CD4-positive, alpha-beta T cell (primary cell): ENCODE measurements at regions of chr3 and their contacts with region 1.

Region 1: DNA sequence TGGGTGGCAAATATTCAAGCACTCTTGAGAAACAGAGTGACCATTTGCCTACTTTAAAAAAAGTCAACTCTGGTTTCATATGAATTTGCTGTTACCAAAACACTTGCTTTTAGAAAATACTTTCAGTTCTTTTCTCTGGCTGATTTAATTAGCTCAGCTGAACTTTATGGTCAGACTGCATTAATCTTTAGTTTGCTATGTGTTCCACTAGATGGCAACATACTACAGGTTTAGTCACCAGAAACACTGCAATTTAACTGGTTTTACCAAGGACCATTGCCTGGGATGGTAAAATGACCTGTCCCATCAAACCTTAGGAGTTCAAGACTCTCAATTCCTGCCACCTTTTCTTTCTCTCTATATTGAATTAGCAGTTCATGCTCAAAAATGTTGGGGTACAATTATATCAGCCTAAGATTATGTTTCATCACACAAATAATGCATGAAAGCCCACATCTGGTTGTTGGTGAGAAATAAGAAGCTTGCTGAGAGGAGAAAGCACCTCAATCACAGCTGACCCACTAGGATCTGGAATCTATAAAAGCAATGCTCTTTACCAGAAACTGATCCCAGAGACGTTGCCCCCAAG is 14.2 kb downstream of the EIF4E3 start:
- DNase-seq: peak in 3 of 14 experiments; percentile 68 to 72 (median 71)
- ATAC-seq: peak; percentile 58
- H3K4me3 ChIP-seq: no peak overlapping the region
- H3K4me3 Mint-ChIP-seq: peak overlapping the region; percentile 26
- H3K27ac ChIP-seq: no peak overlapping the region
- H3K27ac Mint-ChIP-seq: peak overlapping the region; percentile 80
- H3K4me1 ChIP-seq: peaks cover 50% of the 10 kb centered on the region
- H3K4me1 Mint-ChIP-seq: peaks cover 92% of the 10 kb centered on the region
- H3K27me3 ChIP-seq: no peaks in the 10 kb centered on the region
- H3K27me3 Mint-ChIP-seq: no peaks in the 10 kb centered on the region
- CTCF ChIP-seq: peak; percentile 86

Region 2: DNA sequence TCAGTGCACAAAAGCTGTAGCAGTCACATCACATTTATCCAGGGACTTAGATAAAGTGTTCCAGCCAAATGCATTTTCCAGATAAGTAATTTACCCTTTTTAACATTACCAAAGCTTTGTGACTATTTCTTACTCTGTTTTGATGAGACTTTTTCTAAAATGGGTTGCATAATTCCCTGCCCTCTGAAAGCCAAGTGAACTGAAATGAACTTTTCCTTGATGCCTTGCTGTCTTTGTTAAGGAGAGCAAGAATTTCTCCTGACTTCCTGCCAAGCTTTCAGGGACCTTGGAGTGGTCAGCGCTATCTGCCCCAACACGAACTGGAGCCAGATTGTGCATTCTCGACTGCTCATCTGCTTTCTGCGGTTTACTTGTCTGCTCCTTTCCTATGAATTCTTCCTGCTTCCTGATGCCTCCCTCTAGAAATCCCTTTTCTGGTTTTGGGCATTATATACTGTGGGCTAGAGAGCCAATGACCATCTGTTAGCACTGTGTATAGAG is 20.6 kb before region 1 on chr3:
- CTCF ChIA-PET with region 1: no interaction called
- POLR2A ChIA-PET with region 1: no interaction called
- intact Hi-C with region 1: no loop called
- DNase-seq: no peak
- ATAC-seq: no peak
- H3K4me3 ChIP-seq: no peak overlapping the region
- H3K4me3 Mint-ChIP-seq: no peak overlapping the region
- H3K27ac ChIP-seq: no peak overlapping the region
- H3K27ac Mint-ChIP-seq: no peak overlapping the region
- H3K4me1 ChIP-seq: no peaks in the 10 kb centered on the region
- H3K4me1 Mint-ChIP-seq: peaks cover 9% of the 10 kb centered on the region
- H3K27me3 ChIP-seq: no peaks in the 10 kb centered on the region
- H3K27me3 Mint-ChIP-seq: no peaks in the 10 kb centered on the region
- CTCF ChIP-seq: no peak

Region 3: DNA sequence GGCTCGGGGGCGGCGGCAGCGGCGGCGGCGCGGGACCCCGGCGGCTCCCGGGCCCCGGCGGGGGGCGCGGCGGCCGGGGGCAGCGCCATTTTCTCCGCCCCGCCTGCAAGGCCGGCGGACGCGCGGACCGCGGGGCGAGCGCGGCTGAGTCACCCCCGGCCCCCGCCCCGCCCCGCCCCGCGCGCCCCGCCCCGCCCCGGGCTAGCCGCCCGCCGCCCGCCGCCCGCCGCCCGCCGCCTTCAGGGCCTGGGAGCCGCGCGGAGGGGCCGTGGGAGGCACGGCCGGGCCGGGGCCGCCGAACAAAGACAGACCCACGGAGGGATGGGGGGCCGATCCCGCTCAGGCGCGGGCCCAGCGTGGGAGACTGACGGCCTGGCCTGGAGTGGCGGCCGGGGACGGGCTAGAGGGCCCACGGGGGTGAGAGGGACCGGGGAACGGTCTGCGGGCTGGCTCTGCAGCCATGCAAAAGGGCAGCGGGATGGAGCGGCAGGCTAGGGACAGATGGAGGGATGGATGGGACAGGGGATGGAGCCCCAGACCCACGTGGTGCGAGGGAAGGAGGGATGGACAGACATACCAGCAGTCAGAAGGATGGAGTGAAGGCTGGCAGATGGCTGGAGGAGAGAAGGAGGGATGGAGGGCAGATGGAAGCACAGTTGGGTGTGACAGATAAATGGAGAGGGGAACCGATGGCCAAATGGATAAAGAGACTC is 14.4 kb after region 1 on chr3 and contains the start of gene EIF4E3:
- CTCF ChIA-PET with region 1: interaction called, 17 read pairs
- POLR2A ChIA-PET with region 1: interaction called, 24 read pairs
- intact Hi-C with region 1: loop called (anchors 1 to 2 kb)
- DNase-seq: peak in 8 of 14 experiments; percentile 19 to 81 (median 53)
- ATAC-seq: peak; percentile 21
- H3K4me3 ChIP-seq: peak within 1 kb of the TSS; percentile 90
- H3K4me3 Mint-ChIP-seq: peak within 1 kb of the TSS; percentile 89
- H3K27ac ChIP-seq: peak within 1 kb of the TSS; percentile 63 to 84
- H3K27ac Mint-ChIP-seq: peak within 1 kb of the TSS; percentile 91
- H3K4me1 ChIP-seq: peaks cover 62% of the 10 kb centered on the region
- H3K4me1 Mint-ChIP-seq: peaks cover 77% of the 10 kb centered on the region
- H3K27me3 ChIP-seq: no peaks in the 10 kb centered on the region
- H3K27me3 Mint-ChIP-seq: no peaks in the 10 kb centered on the region
- CTCF ChIP-seq: no peak
- total RNA-seq, gene EIF4E3: 48.2 to 50.4 TPM

Region 4: GRCh38 chr3:71784914-71785531 is 74.0 kb after region 1 on chr3 and contains the start of gene PROK2:
- CTCF ChIA-PET with region 1: interaction called, 3 read pairs
- POLR2A ChIA-PET with region 1: no interaction called
- intact Hi-C with region 1: loop called in 1 of 2 experiments (anchors 5 kb)
- DNase-seq: peak in 7 of 14 experiments; percentile 9 to 62 (median 32)
- ATAC-seq: peak; percentile 82
- H3K4me3 ChIP-seq: peak within 1 kb of the TSS; percentile 35
- H3K4me3 Mint-ChIP-seq: peak within 1 kb of the TSS; percentile 67
- H3K27ac ChIP-seq: no peak within 1 kb of the TSS
- H3K27ac Mint-ChIP-seq: no peak within 1 kb of the TSS
- H3K4me1 ChIP-seq: peaks cover 17% of the 10 kb centered on the region
- H3K4me1 Mint-ChIP-seq: peaks cover 28% of the 10 kb centered on the region
- H3K27me3 ChIP-seq: peaks cover 27 to 62% of the 10 kb centered on the region in 2 experiments
- H3K27me3 Mint-ChIP-seq: peaks cover 70% of the 10 kb centered on the region
- CTCF ChIP-seq: no peak
- total RNA-seq, gene PROK2: 1.3 to 1.4 TPM

Region 5: GRCh38 chr3:71875461-71875947 is 164.5 kb after region 1 on chr3:
- CTCF ChIA-PET with region 1: no interaction called
- POLR2A ChIA-PET with region 1: no interaction called
- intact Hi-C with region 1: loop called in 1 of 2 experiments (anchors 1 kb)
- DNase-seq: peak; percentile 63 to 84 (median 74)
- ATAC-seq: peak; percentile 99
- H3K4me3 ChIP-seq: no peak overlapping the region
- H3K4me3 Mint-ChIP-seq: no peak overlapping the region
- H3K27ac ChIP-seq: no peak overlapping the region
- H3K27ac Mint-ChIP-seq: no peak overlapping the region
- H3K4me1 ChIP-seq: peaks cover 12% of the 10 kb centered on the region
- H3K4me1 Mint-ChIP-seq: peaks cover 21% of the 10 kb centered on the region
- H3K27me3 ChIP-seq: no peaks in the 10 kb centered on the region
- H3K27me3 Mint-ChIP-seq: no peaks in the 10 kb centered on the region
- CTCF ChIP-seq: peak; percentile 78

Region 6: GRCh38 chr3:72657666-72658065 is 946.7 kb after region 1 on chr3:
- CTCF ChIA-PET with region 1: no interaction called
- POLR2A ChIA-PET with region 1: no interaction called
- intact Hi-C with region 1: loop called (anchors 5 to 10 kb)
- DNase-seq: peak; percentile 17 to 85 (median 50)
- ATAC-seq: peak; percentile 98
- H3K4me3 ChIP-seq: no peak overlapping the region
- H3K4me3 Mint-ChIP-seq: peak overlapping the region; percentile 30
- H3K27ac ChIP-seq: no peak overlapping the region
- H3K27ac Mint-ChIP-seq: peak overlapping the region; percentile 4
- H3K4me1 ChIP-seq: peaks cover 11% of the 10 kb centered on the region
- H3K4me1 Mint-ChIP-seq: peaks cover 18% of the 10 kb centered on the region
- H3K27me3 ChIP-seq: peaks cover 6 to 7% of the 10 kb centered on the region in 2 experiments
- H3K27me3 Mint-ChIP-seq: peaks cover 4% of the 10 kb centered on the region
- CTCF ChIP-seq: no peak